Activated naive CD4-positive, alpha-beta T cell treated with anti-CD3 and anti-CD28 coated beads for 36 hours (primary cell): ENCODE measurements at regions of chr3 and their contacts with region 1.

Region 1: DNA sequence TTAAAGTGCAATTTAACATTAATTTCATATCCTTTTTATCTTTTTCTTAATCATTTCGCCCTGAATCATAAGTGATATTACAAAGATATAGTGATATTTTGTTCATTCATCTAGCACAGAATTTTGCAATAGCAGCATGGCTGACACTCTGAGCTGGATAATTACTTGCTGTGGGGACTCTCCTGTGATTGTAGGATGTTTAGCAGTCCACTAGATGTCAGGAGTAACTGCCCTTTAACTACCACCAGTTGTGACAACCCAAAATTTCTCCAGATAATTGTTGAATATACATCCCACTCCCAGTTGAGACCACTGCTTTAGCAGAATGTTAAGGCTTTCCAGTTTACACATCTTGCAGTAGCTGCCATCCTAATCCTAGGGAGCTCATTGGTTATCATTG is 196.8 kb upstream of the MBNL1 start:
- DNase-seq: peak; percentile 18
- H3K4me3 Mint-ChIP-seq: no peak overlapping the region
- H3K27ac Mint-ChIP-seq: no peak overlapping the region
- H3K4me1 Mint-ChIP-seq: peaks cover 3% of the 10 kb centered on the region
- H3K27me3 Mint-ChIP-seq: no peaks in the 10 kb centered on the region

Region 2: DNA sequence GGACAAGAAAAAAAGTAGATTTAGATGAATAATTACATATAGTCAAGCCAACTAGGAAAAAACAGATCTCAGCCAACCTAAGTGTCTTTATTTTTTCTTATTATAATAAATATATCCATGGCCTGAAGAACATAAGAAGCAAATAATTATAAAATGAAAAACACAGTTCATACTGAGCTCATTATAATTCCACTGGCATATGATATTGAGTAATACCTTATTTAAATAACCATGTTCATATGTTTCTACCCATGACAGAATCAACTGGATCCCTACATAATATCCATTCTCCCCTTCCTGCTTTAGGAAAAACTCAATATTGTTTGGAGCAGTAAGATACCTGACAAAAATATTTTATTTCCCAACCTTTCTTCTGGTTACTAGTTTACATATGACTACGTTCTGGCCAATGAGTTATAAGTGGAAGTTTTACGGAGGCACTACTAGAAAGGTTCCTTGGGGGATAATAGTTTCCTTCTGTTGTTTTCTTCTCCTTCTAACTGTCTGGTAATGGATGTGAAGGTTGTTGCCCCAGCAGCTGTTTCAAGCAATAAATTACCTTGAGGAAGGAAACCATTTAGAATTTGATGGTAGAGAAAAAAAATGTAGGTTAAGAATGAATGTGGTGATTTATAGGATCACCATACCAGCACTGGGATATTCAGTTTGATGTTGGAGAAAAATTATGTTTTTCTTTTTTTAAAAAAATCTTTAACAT is 12.7 kb after region 1 on chr3:
- CTCF ChIA-PET with region 1: interaction called, 10 read pairs
- intact Hi-C with region 1: no loop called
- DNase-seq: no peak
- H3K4me3 Mint-ChIP-seq: no peak overlapping the region
- H3K27ac Mint-ChIP-seq: no peak overlapping the region
- H3K4me1 Mint-ChIP-seq: peaks cover 8% of the 10 kb centered on the region
- H3K27me3 Mint-ChIP-seq: no peaks in the 10 kb centered on the region

Region 3: GRCh38 chr3:152183473-152183872 is 111.5 kb after region 1 on chr3:
- CTCF ChIA-PET with region 1: interaction called, 3 read pairs
- intact Hi-C with region 1: loop called (anchors 1 kb)
- DNase-seq: peak; percentile 80
- H3K4me3 Mint-ChIP-seq: peak overlapping the region; percentile 46
- H3K27ac Mint-ChIP-seq: peak overlapping the region; percentile 28
- H3K4me1 Mint-ChIP-seq: peaks cover 81% of the 10 kb centered on the region
- H3K27me3 Mint-ChIP-seq: no peaks in the 10 kb centered on the region

Region 4: GRCh38 chr3:152349392-152349791 is 277.5 kb after region 1 on chr3:
- CTCF ChIA-PET with region 1: interaction called, 3 read pairs
- intact Hi-C with region 1: loop called (anchors 10 kb)
- DNase-seq: no peak
- H3K4me3 Mint-ChIP-seq: no peak overlapping the region
- H3K27ac Mint-ChIP-seq: no peak overlapping the region
- H3K4me1 Mint-ChIP-seq: peaks cover 46% of the 10 kb centered on the region
- H3K27me3 Mint-ChIP-seq: no peaks in the 10 kb centered on the region

Region 5: GRCh38 chr3:152444029-152444641 is 372.2 kb after region 1 on chr3:
- CTCF ChIA-PET with region 1: interaction called, 12 read pairs
- intact Hi-C with region 1: loop called (anchors 1 kb)
- DNase-seq: no peak
- H3K4me3 Mint-ChIP-seq: no peak overlapping the region
- H3K27ac Mint-ChIP-seq: peak overlapping the region; percentile 56
- H3K4me1 Mint-ChIP-seq: peaks cover 68% of the 10 kb centered on the region
- H3K27me3 Mint-ChIP-seq: no peaks in the 10 kb centered on the region

Region 6: DNA sequence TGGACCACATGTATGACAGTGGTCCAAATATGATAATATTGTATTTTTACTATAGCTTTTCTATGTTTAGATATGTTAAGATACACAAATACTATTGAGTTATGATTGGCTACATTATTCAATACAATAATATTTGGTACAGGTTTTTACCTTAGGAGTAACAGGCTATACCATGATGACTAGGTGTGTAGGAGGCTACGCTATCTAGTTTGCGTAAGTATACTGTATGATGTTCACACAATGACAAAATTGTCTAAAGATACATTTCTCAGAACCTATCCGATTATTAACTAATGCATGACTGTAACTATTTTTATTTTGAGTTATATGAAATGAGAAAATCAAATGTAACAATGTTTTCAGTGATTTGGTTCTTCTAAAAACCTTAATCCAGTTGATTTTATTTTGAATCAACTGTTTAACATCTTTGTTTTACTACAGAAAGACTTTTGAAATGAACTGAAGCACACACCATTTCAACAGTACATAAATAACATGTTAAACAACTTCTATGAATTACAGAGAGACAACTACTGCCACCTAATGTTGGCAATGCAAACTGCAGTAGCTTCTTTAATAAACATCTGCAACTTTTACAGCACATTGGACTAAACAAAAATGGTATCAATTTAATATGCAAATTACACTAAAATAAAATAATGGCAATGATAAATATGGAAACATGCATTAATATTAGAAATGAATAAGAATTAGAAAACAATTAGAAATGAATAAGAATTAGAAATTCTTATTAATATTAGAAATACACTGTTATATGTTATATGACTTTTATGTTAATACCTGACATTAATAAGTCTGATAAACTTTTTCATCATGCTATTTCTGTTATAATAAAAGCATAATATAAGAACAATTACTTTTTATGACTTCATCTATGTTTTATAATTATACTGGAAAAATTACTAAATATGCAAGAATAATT is 452.5 kb after region 1 on chr3:
- CTCF ChIA-PET with region 1: interaction called, 11 read pairs
- intact Hi-C with region 1: loop called (anchors 1 kb)
- DNase-seq: peak; percentile 74
- H3K4me3 Mint-ChIP-seq: no peak overlapping the region
- H3K27ac Mint-ChIP-seq: no peak overlapping the region
- H3K4me1 Mint-ChIP-seq: no peaks in the 10 kb centered on the region
- H3K27me3 Mint-ChIP-seq: no peaks in the 10 kb centered on the region

Region 7: GRCh38 chr3:152574461-152575079 is 502.6 kb after region 1 on chr3:
- CTCF ChIA-PET with region 1: no interaction called
- intact Hi-C with region 1: loop called (anchors 1 kb)
- DNase-seq: peak; percentile 68
- H3K4me3 Mint-ChIP-seq: no peak overlapping the region
- H3K27ac Mint-ChIP-seq: no peak overlapping the region
- H3K4me1 Mint-ChIP-seq: no peaks in the 10 kb centered on the region
- H3K27me3 Mint-ChIP-seq: no peaks in the 10 kb centered on the region